Activated T-helper 1 cell treated with anti-CD3 and anti-CD28 coated beads, Interleukin-12 subunit alpha, Interleukin-12 subunit beta, Interleukin-2, Interleukin-4 antibody, amounts not matched to agents 30 ng/mL and 10 ng/mL and 1 ng/mL, durations not matched to agents 14 hours and 24 hours and 36 hours (primary cell): ENCODE measurements at regions of chr12 and their contacts with region 1.

Region 1: DNA sequence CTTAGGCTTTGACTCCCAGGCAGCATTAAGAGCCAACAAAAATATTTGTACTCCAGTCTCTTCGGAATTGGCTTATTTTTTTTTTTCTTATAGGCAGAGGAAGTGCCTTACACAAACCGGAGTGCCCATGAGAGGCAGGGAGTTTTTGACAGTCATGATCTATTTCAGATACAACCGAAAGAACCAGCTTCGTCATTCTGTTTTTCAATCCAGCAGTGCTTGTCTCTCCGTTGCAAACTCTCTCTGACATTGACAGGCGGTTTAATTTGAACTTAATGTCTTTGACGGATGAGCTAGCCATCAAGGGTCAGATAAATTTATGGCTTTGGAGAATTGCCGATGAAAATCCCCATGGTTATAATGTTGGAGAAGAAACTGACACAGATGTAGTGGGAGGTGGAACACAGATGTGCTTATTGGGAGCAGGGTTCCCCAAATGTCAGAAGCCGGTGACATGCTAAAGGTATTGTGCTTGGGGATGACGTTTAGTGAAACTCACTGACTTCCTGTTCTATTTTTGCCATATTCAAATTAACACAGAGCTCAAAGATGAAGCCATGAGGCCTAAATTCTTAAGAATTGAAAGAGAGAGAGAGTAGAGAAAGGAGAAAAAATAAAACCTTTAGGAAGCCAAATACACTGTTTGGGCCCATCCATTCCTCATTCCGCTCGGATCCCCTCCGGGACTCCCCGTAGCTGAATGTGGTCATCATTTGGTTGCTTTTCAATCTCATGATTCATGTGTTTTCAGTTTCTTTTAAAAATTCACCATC is 59.7 kb downstream of the PLXNC1 start:
- DNase-seq: peak; percentile 46
- H3K4me3 Mint-ChIP-seq: peak overlapping the region; percentile 79
- H3K27ac Mint-ChIP-seq: peak overlapping the region; percentile 100
- H3K4me1 Mint-ChIP-seq: peaks cover 73% of the 10 kb centered on the region
- H3K27me3 Mint-ChIP-seq: no peaks in the 10 kb centered on the region

Region 2: GRCh38 chr12:93569656-93570551 is 638.1 kb before region 1 on chr12:
- intact Hi-C with region 1: loop called (anchors 5 kb)
- DNase-seq: peak; percentile 68
- H3K4me3 Mint-ChIP-seq: peak overlapping the region; percentile 88
- H3K27ac Mint-ChIP-seq: peak overlapping the region; percentile 77
- H3K4me1 Mint-ChIP-seq: peaks cover 42% of the 10 kb centered on the region
- H3K27me3 Mint-ChIP-seq: peaks cover 15% of the 10 kb centered on the region

Region 3: GRCh38 chr12:94149119-94149780 is 58.8 kb before region 1 on chr12:
- intact Hi-C with region 1: loop called (anchors 1 kb)
- DNase-seq: peak; percentile 32
- H3K4me3 Mint-ChIP-seq: peak overlapping the region; percentile 92
- H3K27ac Mint-ChIP-seq: peak overlapping the region; percentile 55
- H3K4me1 Mint-ChIP-seq: peaks cover 44% of the 10 kb centered on the region
- H3K27me3 Mint-ChIP-seq: peaks cover 24% of the 10 kb centered on the region

Region 4: DNA sequence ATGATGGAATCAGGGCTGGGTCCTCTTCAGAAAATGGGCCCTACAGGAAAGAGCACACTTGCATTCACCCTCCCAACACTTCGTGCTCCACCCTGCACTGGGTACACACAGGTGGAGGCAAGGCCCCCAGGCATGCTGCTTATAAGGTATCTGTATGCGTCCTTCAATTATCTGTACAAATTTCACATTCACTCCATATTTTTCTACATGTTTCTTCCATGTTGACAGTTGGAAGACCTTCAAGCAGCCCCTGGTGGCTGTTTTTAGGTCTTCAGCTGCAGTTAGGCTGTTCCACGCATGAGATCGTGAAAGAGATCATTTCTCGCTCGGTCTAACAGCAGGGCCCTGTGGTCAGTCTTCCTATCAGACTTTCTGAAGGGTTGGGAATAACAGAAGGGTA is 12.6 kb before region 1 on chr12:
- intact Hi-C with region 1: no loop called
- DNase-seq: no peak
- H3K4me3 Mint-ChIP-seq: no peak overlapping the region
- H3K27ac Mint-ChIP-seq: no peak overlapping the region
- H3K4me1 Mint-ChIP-seq: peaks cover 16% of the 10 kb centered on the region
- H3K27me3 Mint-ChIP-seq: no peaks in the 10 kb centered on the region

Region 5: GRCh38 chr12:94244165-94245133 is 36.4 kb after region 1 on chr12:
- intact Hi-C with region 1: loop called (anchors 1 kb)
- DNase-seq: peak; percentile 25
- H3K4me3 Mint-ChIP-seq: peak overlapping the region; percentile 25
- H3K27ac Mint-ChIP-seq: peak overlapping the region; percentile 50
- H3K4me1 Mint-ChIP-seq: peaks cover 41% of the 10 kb centered on the region
- H3K27me3 Mint-ChIP-seq: no peaks in the 10 kb centered on the region

Region 6: GRCh38 chr12:94305130-94305957 is 97.3 kb after region 1 on chr12:
- intact Hi-C with region 1: loop called (anchors 1 kb)
- DNase-seq: peak; percentile 75
- H3K4me3 Mint-ChIP-seq: peak overlapping the region; percentile 58
- H3K27ac Mint-ChIP-seq: peak overlapping the region; percentile 80
- H3K4me1 Mint-ChIP-seq: peaks cover 76% of the 10 kb centered on the region
- H3K27me3 Mint-ChIP-seq: no peaks in the 10 kb centered on the region

Region 7: DNA sequence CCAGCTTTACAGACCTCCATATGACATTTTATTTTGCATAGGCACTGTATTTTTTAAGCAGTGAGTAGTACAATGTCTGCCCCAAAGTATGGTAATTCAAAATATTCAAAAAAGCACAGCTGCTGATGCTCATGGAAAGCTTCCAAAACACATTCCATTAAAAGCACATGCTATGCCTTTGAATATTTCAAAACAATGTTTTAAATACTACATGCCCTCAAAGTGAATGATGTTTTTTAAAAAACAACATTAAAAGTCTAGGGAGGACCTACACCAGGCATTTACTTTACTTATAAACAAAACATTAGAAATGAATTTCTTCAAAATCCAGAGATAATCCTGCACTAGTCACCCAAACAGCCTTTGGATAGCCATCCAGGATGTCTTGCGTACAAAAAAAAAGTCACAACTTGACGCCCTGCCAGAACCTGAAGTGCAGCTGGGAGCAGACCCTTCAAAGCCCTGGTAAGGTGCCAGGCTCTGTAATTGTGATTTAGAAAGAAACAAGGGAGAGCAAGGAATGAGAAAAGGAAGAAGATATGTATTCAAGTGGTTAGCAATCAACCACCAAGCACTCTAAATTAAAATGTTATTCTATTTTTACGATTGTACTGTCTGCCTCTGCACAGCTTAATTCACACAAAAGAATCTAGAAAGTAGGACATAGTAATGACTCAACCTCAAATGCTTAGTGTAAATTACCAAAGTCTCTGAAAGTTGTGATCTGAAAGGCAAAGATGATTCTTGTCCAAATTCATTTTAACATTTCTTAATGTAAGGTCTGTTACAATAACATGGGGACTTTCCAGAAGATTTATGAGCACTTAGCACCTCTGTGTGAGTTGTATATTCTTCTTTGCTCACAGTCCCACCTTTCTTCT is 219.7 kb after region 1 on chr12:
- intact Hi-C with region 1: loop called (anchors 2 kb)
- DNase-seq: no peak
- H3K4me3 Mint-ChIP-seq: no peak overlapping the region
- H3K27ac Mint-ChIP-seq: peak overlapping the region; percentile 49
- H3K4me1 Mint-ChIP-seq: peaks cover 18% of the 10 kb centered on the region
- H3K27me3 Mint-ChIP-seq: no peaks in the 10 kb centered on the region

Region 8: DNA sequence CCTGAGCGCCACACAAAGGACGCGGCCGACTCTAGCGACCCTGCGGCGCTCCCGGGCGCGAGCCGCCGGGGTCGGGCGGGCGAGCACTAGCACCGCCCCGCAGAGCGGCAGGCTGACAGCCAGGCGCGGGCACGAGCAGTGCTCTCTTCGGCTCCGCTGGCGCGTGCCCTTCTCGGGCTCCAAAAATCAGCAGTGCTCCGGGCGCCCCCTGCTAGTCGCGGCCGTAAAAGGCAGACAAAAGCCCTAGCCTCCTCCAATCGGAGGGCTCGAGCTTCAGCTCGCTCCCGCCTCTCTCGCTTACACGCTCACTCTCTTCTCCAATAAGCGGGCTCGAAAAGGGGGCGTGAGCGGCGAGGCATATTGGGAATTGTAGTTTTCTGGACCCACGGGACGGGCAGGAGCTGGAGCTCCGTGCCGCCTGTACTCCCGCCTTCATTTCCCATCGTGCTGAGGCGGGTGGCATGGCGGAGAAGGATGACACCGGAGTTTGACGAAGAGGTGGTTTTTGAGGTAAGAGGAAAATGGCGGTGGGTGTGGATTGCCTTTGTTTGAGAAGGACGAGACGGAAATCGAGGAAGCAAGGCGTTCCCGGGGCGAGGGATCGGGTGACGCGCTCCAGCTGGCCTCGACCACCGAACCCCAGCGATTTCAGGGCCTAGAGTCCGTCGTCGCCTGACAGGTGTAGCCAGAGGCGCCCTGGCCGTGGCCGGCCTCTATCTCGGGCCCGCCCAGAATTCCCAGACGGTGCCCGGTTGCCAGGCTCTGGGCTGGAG is 1009.5 kb after region 1 on chr12 and contains the starts of genes FGD6 and VEZT:
- intact Hi-C with region 1: loop called (anchors 10 kb)
- DNase-seq: peak; percentile 98
- H3K4me3 Mint-ChIP-seq: peak within 1 kb of the TSS; percentile 97
- H3K27ac Mint-ChIP-seq: peak within 1 kb of the TSS; percentile 98
- H3K4me1 Mint-ChIP-seq: peaks cover 37% of the 10 kb centered on the region
- H3K27me3 Mint-ChIP-seq: peaks cover 9% of the 10 kb centered on the region
- total RNA-seq, gene FGD6: 0.64 and 0.86 TPM in 2 replicates
- total RNA-seq, gene VEZT: 58.1 and 64.7 TPM in 2 replicates